ENCODE measurements at regions of chr2 and their contacts with region 1.

Region 1: GRCh38 chr2:200963124-200963917 is at the start of gene ORC2:
- DNase-seq: peak; percentile 84 to 96 (median 93)
- ATAC-seq: peak; percentile 94
- H3K4me3 ChIP-seq: peak within 1 kb of the TSS; percentile 70 to 90
- H3K4me3 Mint-ChIP-seq: peak within 1 kb of the TSS; percentile 99
- H3K27ac ChIP-seq: peak within 1 kb of the TSS; percentile 76 to 90
- H3K27ac Mint-ChIP-seq: peak within 1 kb of the TSS; percentile 99
- H3K4me1 ChIP-seq: peaks cover 30% of the 10 kb centered on the region
- H3K4me1 Mint-ChIP-seq: peaks cover 57% of the 10 kb centered on the region
- H3K27me3 ChIP-seq: no peaks in the 10 kb centered on the region
- H3K27me3 Mint-ChIP-seq: no peaks in the 10 kb centered on the region
- CTCF ChIP-seq: peak; percentile 51
- total RNA-seq, gene ORC2: 17.7 to 21.3 TPM

Region 2: DNA sequence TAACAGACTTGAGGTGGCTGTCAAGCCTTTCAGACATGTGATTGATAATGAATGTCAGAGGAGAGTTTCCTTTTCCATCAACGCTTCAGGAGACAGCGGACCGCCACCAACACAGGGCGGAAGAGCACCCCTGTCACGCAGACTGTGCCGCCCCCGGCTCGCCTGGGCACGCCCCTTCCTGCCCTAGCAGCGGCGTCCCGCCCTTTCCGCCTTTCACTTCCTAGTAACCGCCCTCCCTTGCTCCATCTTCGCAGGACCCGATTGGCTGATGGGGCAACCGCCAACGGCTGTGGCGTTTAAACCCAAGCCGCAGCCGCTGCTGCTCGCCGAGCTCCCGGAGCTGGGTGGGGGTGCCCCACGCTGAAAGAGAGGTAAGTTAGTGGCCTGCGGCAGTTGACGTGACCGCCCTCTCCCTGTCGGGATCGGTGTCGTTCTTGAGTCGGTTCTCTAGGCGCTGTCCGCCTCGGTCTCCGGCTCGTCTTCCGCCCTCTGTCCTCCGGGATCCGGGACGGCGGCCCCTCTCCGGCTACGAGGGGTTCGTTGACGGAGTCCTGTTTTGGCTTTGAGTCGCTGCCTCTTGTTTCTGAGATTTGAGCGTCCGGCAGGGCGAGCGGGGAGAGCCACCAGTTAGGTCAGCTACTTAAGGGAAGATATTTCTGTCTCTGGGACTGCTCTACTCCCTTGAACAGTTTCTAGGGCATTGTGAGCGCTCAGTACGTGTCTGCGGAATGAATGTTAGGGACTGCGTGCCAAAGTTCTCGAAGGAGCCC is 437.3 kb before region 1 on chr2 and contains the start of gene SGO2:
- CTCF ChIA-PET with region 1: no interaction called
- POLR2A ChIA-PET with region 1: no interaction called
- intact Hi-C with region 1: loop called in 1 of 2 experiments (anchors 1 kb)
- DNase-seq: peak; percentile 92 to 97 (median 95)
- ATAC-seq: peak; percentile 100
- H3K4me3 ChIP-seq: peak within 1 kb of the TSS; percentile 73 to 84
- H3K4me3 Mint-ChIP-seq: peak within 1 kb of the TSS; percentile 91
- H3K27ac ChIP-seq: peak within 1 kb of the TSS; percentile 18 to 71
- H3K27ac Mint-ChIP-seq: peak within 1 kb of the TSS; percentile 87
- H3K4me1 ChIP-seq: peaks cover 7% of the 10 kb centered on the region
- H3K4me1 Mint-ChIP-seq: peaks cover 10% of the 10 kb centered on the region
- H3K27me3 ChIP-seq: no peaks in the 10 kb centered on the region
- H3K27me3 Mint-ChIP-seq: no peaks in the 10 kb centered on the region
- CTCF ChIP-seq: no peak
- total RNA-seq, gene SGO2: 0.52 to 0.69 TPM

Region 3: DNA sequence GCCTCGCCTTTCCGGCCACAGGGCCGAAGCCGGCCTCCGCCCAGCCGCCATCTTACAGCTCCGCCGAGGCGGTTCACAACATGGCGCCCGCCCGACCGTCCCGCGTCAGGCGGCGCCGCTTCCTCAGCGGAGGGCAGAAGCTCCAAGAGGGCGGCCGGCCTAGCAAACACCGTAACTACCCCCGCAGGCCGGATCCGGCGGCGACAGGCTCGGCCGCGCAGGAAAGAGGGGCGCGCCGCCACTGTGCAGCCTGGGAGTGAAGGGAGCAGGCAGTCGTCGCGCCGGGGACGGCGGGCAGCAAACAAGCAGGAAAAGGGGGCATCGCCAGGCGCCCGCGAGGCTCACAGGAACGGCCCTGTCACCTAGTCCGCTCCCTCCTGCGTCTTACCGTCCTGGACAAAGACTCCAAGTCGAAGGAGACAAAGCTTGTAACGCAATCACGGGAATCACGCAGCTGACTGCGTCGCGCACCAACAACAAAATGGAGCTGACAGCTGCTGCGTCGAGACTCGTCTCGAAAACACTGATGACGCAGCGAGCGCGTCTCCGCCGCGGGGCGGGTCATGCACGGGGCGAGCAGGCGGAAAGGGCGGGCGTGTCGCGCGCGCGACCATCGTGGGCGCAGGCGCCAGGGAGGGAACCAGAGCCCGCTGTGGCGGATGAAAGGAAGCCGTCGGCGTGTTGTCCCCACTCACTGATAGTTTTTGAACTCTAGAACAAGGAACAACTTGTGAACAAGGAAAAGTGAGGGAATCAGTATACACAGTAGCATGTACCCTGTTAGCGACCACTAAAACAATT is 98.9 kb before region 1 on chr2 and contains the start of gene CLK1:
- CTCF ChIA-PET with region 1: no interaction called
- POLR2A ChIA-PET with region 1: interaction called, 20 read pairs
- intact Hi-C with region 1: loop called (anchors 1 to 2 kb)
- DNase-seq: peak; percentile 94 to 99 (median 98)
- ATAC-seq: peak; percentile 78
- H3K4me3 ChIP-seq: peak within 1 kb of the TSS; percentile 84 to 98
- H3K4me3 Mint-ChIP-seq: peak within 1 kb of the TSS; percentile 96
- H3K27ac ChIP-seq: peak within 1 kb of the TSS; percentile 98 to 100
- H3K27ac Mint-ChIP-seq: peak within 1 kb of the TSS; percentile 100
- H3K4me1 ChIP-seq: peaks cover 29% of the 10 kb centered on the region
- H3K4me1 Mint-ChIP-seq: peaks cover 43% of the 10 kb centered on the region
- H3K27me3 ChIP-seq: no peaks in the 10 kb centered on the region
- H3K27me3 Mint-ChIP-seq: no peaks in the 10 kb centered on the region
- CTCF ChIP-seq: no peak
- total RNA-seq, gene CLK1: 1,353 to 1,404 TPM

Region 4: GRCh38 chr2:200944467-200945394 is 18.6 kb before region 1 on chr2:
- CTCF ChIA-PET with region 1: interaction called, 3 read pairs
- POLR2A ChIA-PET with region 1: no interaction called
- intact Hi-C with region 1: loop called in 1 of 2 experiments (anchors 2 kb)
- DNase-seq: peak in 1 of 9 experiments; percentile 22
- ATAC-seq: no peak
- H3K4me3 ChIP-seq: no peak overlapping the region
- H3K4me3 Mint-ChIP-seq: no peak overlapping the region
- H3K27ac ChIP-seq: no peak overlapping the region
- H3K27ac Mint-ChIP-seq: peak overlapping the region; percentile 41
- H3K4me1 ChIP-seq: no peaks in the 10 kb centered on the region
- H3K4me1 Mint-ChIP-seq: peaks cover 1% of the 10 kb centered on the region
- H3K27me3 ChIP-seq: no peaks in the 10 kb centered on the region
- H3K27me3 Mint-ChIP-seq: no peaks in the 10 kb centered on the region
- CTCF ChIP-seq: no peak

Region 5: DNA sequence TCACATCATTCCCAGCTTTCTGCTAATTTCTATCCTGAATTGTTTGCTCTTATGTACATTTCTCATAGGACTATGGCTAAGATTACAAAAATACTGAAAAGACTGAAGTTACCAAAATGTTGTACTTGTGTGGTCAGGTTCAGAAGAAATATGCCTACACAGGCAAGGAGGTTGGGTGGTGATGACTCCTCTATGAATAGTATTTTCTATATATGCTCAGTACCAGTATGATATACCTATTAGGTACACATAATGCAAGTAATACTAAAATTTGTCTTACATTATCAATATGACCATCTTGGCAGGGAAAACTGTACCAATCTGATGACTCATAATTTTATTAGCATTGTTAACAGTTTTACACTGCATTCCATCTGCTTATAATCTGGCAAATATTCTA is 12.4 kb after region 1 on chr2:
- CTCF ChIA-PET with region 1: interaction called, 22 read pairs
- POLR2A ChIA-PET with region 1: interaction called, 13 read pairs
- intact Hi-C with region 1: no loop called
- DNase-seq: no peak
- ATAC-seq: no peak
- H3K4me3 ChIP-seq: no peak overlapping the region
- H3K4me3 Mint-ChIP-seq: no peak overlapping the region
- H3K27ac ChIP-seq: no peak overlapping the region
- H3K27ac Mint-ChIP-seq: no peak overlapping the region
- H3K4me1 ChIP-seq: no peaks in the 10 kb centered on the region
- H3K4me1 Mint-ChIP-seq: no peaks in the 10 kb centered on the region
- H3K27me3 ChIP-seq: no peaks in the 10 kb centered on the region
- H3K27me3 Mint-ChIP-seq: no peaks in the 10 kb centered on the region
- CTCF ChIP-seq: no peak

Region 6: DNA sequence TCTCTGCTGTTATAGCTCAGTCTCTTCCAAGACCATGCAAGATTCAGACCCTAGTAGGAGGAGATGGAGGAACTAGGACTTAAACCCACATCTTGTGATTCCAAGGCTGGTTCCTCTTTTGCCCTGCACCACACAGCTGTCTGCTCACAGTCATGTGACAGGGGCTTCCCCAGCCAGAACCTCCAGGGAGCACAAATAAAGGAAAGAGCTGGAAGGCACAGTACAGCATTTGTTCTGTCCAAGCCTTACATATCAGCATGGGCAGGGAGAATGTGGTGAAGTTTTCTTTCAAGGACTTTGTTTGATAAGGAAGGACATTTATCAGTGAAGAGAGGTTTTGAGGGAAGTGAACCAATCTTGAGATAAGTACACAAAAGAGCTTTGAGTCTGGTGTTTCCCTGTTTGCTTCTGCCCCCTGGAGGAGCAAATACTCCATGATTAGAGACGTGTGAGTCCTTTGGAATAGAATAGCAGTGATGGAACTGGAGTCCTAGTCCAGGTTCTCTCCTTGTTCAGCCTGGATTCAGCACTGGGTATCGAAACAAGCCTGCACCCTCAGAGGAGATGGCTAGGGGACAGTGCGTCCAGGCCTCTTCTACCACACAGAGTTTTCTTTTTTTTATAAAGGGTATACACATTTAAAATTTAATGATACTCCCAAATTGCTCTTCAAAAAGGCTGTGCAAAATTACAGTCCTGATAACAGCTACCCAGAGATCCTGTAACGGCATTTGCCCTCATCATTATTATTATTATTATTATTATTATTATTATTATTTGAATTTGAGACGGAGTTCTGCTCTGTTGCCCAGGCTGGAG is 195.0 kb after region 1 on chr2:
- CTCF ChIA-PET with region 1: interaction called, 5 read pairs
- POLR2A ChIA-PET with region 1: interaction called, 7 read pairs
- intact Hi-C with region 1: loop called (anchors 5 to 10 kb)
- DNase-seq: peak; percentile 21 to 83 (median 65)
- ATAC-seq: peak; percentile 93
- H3K4me3 ChIP-seq: no peak overlapping the region
- H3K4me3 Mint-ChIP-seq: no peak overlapping the region
- H3K27ac ChIP-seq: peak overlapping the region in 1 of 2 experiments; percentile 68
- H3K27ac Mint-ChIP-seq: peak overlapping the region; percentile 83
- H3K4me1 ChIP-seq: peaks cover 11% of the 10 kb centered on the region
- H3K4me1 Mint-ChIP-seq: peaks cover 18% of the 10 kb centered on the region
- H3K27me3 ChIP-seq: no peaks in the 10 kb centered on the region
- H3K27me3 Mint-ChIP-seq: no peaks in the 10 kb centered on the region
- CTCF ChIP-seq: peak; percentile 54

Region 7: DNA sequence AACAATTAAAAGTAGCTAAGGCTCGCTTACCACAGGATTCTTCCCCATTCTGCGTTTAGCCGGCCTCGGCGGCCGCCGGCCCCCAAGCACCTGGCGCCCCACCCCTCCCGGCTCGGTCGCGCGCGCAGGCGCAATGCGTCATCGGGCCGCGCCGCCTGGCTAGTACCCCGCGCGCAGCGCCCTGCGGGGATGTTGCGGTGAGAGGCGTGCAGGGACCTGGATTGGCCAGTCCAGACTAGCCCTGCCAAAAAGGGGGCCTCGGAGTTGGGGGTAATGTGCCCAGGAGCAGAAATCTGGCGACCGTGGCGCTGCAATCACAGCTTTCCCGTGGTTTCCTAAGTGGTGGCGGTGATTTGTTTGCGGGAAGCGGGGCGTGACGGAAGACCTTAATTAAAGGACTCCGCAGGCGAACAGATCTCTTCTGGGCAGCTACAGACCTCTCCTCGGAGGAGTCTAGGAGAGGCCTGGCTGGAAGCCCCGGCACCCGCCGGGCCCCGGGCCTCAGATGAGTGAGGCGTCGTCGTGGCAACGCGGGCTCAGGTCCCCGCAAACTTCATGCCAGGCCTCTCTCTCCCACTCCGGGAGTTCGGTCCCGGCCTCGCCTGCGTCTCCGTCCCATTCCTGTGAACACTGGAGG is 679.4 kb after region 1 on chr2:
- CTCF ChIA-PET with region 1: no interaction called
- POLR2A ChIA-PET with region 1: no interaction called
- intact Hi-C with region 1: loop called (anchors 5 to 10 kb)
- DNase-seq: peak; percentile 65 to 91 (median 83)
- ATAC-seq: peak; percentile 86
- H3K4me3 ChIP-seq: peak overlapping the region; percentile 98 to 99
- H3K4me3 Mint-ChIP-seq: peak overlapping the region; percentile 90
- H3K27ac ChIP-seq: peak overlapping the region; percentile 89 to 99
- H3K27ac Mint-ChIP-seq: peak overlapping the region; percentile 96
- H3K4me1 ChIP-seq: no peaks in the 10 kb centered on the region
- H3K4me1 Mint-ChIP-seq: peaks cover 14% of the 10 kb centered on the region
- H3K27me3 ChIP-seq: no peaks in the 10 kb centered on the region
- H3K27me3 Mint-ChIP-seq: no peaks in the 10 kb centered on the region
- CTCF ChIP-seq: no peak

Measured in CD8-positive, alpha-beta T cell (primary cell).